K562 (cell line): ENCODE measurements at regions of chr19 and their contacts with region 1.

Region 1: DNA sequence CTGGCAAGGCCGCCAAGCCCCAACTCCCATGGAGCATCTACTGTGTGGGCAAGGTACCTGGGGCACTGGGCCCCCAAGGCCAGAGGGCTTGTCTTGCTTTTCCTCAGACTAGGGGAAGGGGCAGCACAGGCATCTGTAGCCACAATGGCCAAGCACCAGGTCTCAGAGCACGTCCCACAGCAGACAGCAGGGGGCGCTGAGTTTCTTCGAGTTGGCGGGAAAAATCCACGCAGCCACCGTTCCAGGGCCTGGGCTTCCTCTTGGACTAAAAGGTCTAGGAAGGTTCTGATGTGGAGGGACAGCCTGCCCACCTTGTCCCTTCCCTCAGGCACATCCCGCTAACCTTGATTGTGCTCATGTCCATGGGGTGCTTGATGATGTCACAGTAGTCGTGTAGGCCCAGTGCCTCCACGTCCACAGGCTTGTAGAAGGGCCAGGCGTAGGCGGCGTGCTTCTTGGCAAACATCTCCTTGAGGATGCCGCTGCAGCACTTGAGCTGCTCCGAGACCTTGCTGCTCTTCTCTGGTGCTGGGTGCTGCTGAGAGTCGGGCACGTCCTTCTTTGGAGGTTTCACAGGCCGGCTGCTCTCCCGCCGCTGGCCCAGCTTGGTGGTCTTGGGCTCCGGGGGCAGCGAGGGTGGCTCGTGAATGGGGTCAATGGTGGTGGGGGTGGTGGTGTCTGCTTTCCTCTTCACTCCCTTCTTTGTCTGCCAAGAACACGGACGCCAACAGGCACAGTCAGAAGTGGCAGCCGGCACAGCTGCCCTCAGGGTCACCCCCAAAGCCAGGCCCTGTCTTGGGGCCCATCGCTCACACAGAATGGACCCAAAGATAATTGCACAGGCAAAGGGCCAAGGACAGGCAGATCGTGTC is 32.0 kb upstream of the EPHX3 start:
- DNase-seq: peak; percentile 65 to 79 (median 68)
- ATAC-seq: peak; percentile 91
- H3K4me3 ChIP-seq: no peak overlapping the region
- H3K27ac ChIP-seq: no peak overlapping the region
- H3K4me1 ChIP-seq: peaks cover 0 to 6% of the 10 kb centered on the region in 2 experiments; a peak in 2 of 5 replicates
- H3K27me3 ChIP-seq: no peaks in the 10 kb centered on the region
- CTCF ChIP-seq: peak; percentile 77 to 90 (median 80)
- EP300 ChIP-seq: no peak
- POLR2A ChIP-seq: no peak
- RAD21 ChIP-seq: peak; percentile 64 to 84

Region 2: DNA sequence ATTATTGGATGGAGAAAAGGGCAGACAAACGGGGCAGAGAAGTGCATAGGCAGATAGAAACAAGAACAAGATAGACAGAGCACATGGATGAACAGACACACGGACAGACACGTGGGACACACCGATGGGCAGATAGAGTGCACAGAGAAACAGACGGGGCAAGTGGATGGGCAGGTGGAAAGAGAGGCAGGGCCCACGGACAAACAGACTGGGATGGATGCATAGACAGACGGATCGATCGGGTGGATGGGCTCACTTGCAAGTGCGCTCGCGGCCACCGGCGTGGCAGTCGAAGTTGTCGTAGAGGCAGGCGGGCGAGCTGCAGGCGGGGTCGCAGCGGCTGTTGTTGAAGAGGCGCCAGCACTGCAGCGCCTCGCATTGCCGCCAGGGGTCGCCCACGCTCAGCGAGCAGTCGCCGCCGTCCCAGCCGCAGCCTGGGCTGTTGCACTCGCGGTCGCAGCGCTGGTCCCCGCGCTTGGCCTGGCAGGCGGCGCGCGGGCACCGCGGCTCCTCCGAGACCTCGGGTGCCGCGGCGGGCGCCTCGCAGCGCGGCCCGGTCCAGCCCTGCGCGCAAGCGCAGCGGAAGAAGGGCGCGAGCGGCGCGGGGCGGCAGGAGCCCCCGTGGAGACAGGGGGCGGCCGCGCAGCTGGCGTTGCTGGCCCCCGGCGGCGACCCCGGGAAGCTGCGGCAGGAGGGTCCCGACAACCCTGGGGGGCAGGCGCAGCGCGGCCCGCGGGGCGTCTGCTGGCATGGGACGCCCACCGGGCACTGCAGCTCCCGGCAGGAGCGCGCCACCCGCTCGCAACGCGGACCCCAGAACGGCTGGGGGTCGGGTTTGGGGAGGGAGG is 86.8 kb before region 1 on chr19:
- CTCF ChIA-PET with region 1: interaction called, 4 read pairs
- POLR2A ChIA-PET with region 1: interaction called, 3 read pairs
- in situ Hi-C with region 1: no loop called
- intact Hi-C with region 1: loop called (anchors 5 kb)
- DNase-seq: peak; percentile 76 to 87 (median 82)
- ATAC-seq: peak; percentile 78
- H3K4me3 ChIP-seq: peak overlapping the region; percentile 4; the same call in 1 of the 2 replicates
- H3K27ac ChIP-seq: no peak overlapping the region
- H3K4me1 ChIP-seq: peaks cover 4 to 43% of the 10 kb centered on the region in 2 experiments; a peak in 4 of 5 replicates
- H3K27me3 ChIP-seq: no peaks in the 10 kb centered on the region; a peak in 1 of 5 replicates
- CTCF ChIP-seq: peak; percentile 83 to 96 (median 93)
- EP300 ChIP-seq: no peak
- POLR2A ChIP-seq: no peak
- RAD21 ChIP-seq: peak; percentile 79 to 93

Region 3: GRCh38 chr19:15323496-15324227 is 59.4 kb after region 1 on chr19:
- CTCF ChIA-PET with region 1: no interaction called
- POLR2A ChIA-PET with region 1: no interaction called
- in situ Hi-C with region 1: no loop called
- intact Hi-C with region 1: no loop called
- DNase-seq: peak in 3 of 4 experiments; percentile 28 to 51 (median 42)
- ATAC-seq: peak; percentile 36
- H3K4me3 ChIP-seq: no peak overlapping the region
- H3K27ac ChIP-seq: peak overlapping the region; percentile 8; the same call in 1 of the 3 replicates
- H3K4me1 ChIP-seq: peaks cover 26 to 52% of the 10 kb centered on the region in 2 experiments
- H3K27me3 ChIP-seq: no peaks in the 10 kb centered on the region
- CTCF ChIP-seq: no peak
- EP300 ChIP-seq: no peak
- POLR2A ChIP-seq: no peak
- RAD21 ChIP-seq: no peak

Region 4: GRCh38 chr19:15379083-15379995 is 115.0 kb after region 1 on chr19 and contains the start of gene AKAP8:
- CTCF ChIA-PET with region 1: no interaction called
- POLR2A ChIA-PET with region 1: no interaction called
- in situ Hi-C with region 1: no loop called
- intact Hi-C with region 1: loop called (anchors 2 kb)
- DNase-seq: peak; percentile 97 to 99 (median 98)
- ATAC-seq: peak; percentile 91
- H3K4me3 ChIP-seq: peak within 1 kb of the TSS; percentile 90
- H3K27ac ChIP-seq: peak within 1 kb of the TSS; percentile 89
- H3K4me1 ChIP-seq: peaks cover 16 to 37% of the 10 kb centered on the region in 2 experiments
- H3K27me3 ChIP-seq: no peaks in the 10 kb centered on the region; a peak in 1 of 5 replicates
- CTCF ChIP-seq: no peak
- EP300 ChIP-seq: no peak
- POLR2A ChIP-seq: peak; percentile 93
- RAD21 ChIP-seq: no peak
- polyA plus RNA-seq, gene AKAP8: 3.4 to 4.4 TPM